ENCODE measurements at regions of chr3 and their contacts with region 1.

Region 1: GRCh38 chr3:185942907-185943759 is 5.3 kb upstream of the TRA2B start:
- DNase-seq: peak; percentile 87
- ATAC-seq: peak; percentile 71
- H3K4me3 ChIP-seq: no peak overlapping the region
- H3K27ac ChIP-seq: no peak overlapping the region
- H3K4me1 ChIP-seq: peaks cover 36% of the 10 kb centered on the region
- H3K27me3 ChIP-seq: no peaks in the 10 kb centered on the region
- CTCF ChIP-seq: peak; percentile 99

Region 2: DNA sequence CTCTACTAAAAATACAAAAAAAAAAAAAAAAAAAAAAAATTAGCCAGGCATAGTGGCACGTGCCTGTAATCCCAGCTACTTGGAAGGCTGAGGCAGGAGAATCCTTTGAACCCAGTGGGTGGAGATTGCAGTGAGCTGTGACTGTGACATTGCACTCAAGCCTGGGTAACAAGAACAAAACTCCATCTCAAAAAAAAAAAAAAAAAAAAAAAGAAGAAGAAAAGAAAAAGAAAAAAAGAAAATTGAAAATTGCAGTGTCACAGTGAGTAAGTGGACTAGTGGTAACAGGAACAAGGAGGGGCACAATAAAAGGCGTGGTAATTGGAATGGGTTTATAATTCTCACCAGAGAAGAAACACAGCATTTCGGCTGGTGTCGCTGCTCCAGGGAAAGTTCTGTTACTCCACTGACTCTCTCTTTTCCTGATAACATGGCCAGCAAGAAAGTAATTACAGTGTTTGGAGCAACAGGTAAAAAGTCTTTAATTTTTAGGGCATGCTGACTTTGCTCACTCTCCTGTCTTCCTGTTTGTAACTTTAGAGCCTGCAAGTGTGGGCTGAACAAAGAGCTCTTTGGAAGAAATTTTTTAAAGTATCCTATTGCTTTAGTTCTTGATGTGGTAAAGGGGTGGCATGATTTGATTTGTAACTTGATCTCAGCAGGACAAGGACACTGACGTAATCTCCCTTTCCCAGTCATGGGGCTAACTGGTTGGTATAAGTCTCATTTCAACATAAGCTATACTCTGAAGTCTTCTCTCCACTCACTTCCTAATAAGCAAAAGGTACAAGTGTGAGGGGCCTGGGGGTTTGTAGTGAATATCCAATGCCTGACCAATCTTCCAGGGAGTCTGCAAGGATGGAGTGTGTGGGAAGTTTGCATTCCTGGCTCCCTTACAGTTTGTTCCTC is 16.7 kb after region 1 on chr3:
- CTCF ChIA-PET with region 1: interaction called, 12 read pairs
- POLR2A ChIA-PET with region 1: no interaction called
- intact Hi-C with region 1: no loop called
- DNase-seq: peak; percentile 75
- ATAC-seq: peak; percentile 89
- H3K4me3 ChIP-seq: peak overlapping the region; percentile 0; the same call in 1 of the 2 replicates
- H3K27ac ChIP-seq: peak overlapping the region; percentile 95
- H3K4me1 ChIP-seq: peaks cover 21% of the 10 kb centered on the region
- H3K27me3 ChIP-seq: no peaks in the 10 kb centered on the region
- CTCF ChIP-seq: no peak

Region 3: GRCh38 chr3:185976977-185977678 is 34.0 kb after region 1 on chr3:
- CTCF ChIA-PET with region 1: interaction called, 4 read pairs
- POLR2A ChIA-PET with region 1: no interaction called
- intact Hi-C with region 1: loop called (anchors 1 kb)
- DNase-seq: peak; percentile 86
- ATAC-seq: peak; percentile 98
- H3K4me3 ChIP-seq: no peak overlapping the region
- H3K27ac ChIP-seq: no peak overlapping the region
- H3K4me1 ChIP-seq: peaks cover 8% of the 10 kb centered on the region; the same call in 1 of the 2 replicates
- H3K27me3 ChIP-seq: no peaks in the 10 kb centered on the region
- CTCF ChIP-seq: peak; percentile 96

Measured in PC-3 (cell line).